Mammary epithelial cell (primary cell): ENCODE measurements at regions of chr20 and their contacts with region 1.

Region 1: GRCh38 chr20:5126512-5127203 is at the start of gene CDS2:
- DNase-seq: peak; percentile 99
- H3K4me3 ChIP-seq: peak within 1 kb of the TSS; percentile 60 to 84 (median 83)
- H3K27ac ChIP-seq: peak within 1 kb of the TSS; percentile 77
- H3K4me1 ChIP-seq: peaks cover 8% of the 10 kb centered on the region
- H3K27me3 ChIP-seq: no peaks in the 10 kb centered on the region
- CTCF ChIP-seq: peak; percentile 3 to 64
- total RNA-seq, gene CDS2: 37.6 to 63.8 TPM

Region 2: DNA sequence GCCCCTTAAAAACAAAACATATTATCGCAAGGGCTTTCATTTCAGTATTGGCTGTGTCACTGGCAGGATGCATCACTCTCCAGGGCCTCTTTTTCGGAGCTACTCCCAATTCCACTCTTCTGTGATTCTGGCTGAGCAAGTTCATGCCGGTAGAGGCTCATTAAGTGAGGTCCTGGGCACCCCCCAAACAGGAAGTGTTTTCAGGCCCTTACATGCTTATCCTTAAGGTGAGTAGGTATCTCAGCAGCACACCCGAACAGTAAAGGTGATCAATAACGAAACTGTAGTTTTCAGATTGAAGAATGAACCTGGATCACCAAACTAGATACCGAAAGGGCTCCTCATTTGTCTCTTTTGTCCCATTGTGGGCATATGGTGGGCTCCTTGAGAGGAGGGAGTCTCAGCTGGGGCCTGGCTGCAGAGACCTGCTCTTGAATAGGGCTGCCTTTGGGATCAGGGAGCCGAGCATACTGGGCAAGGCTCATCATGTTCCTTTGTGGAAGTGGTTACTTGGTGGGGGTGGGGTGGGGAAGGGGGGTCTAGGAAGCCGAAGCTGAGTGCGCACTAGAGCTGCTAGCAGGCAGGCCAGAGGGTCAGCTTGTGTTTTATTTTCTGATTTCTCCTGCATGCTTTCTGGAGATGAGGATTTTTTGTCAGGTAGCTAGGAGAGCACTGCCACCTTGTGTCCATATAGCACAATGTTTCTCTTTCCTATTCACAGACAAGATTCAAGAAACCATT is 65.3 kb after region 1 on chr20:
- CTCF ChIA-PET with region 1: interaction called, 101 read pairs
- dilution Hi-C with region 1: no loop called
- in situ Hi-C with region 1: loop called in 1 of 2 experiments (anchors 5 kb)
- intact Hi-C with region 1: loop called (anchors 1 kb)
- DNase-seq: peak; percentile 63
- H3K4me3 ChIP-seq: no peak overlapping the region
- H3K27ac ChIP-seq: no peak overlapping the region
- H3K4me1 ChIP-seq: peaks cover 4% of the 10 kb centered on the region
- H3K27me3 ChIP-seq: no peaks in the 10 kb centered on the region
- CTCF ChIP-seq: peak; percentile 63 to 70

Region 3: GRCh38 chr20:5205348-5206210 is 78.9 kb after region 1 on chr20:
- CTCF ChIA-PET with region 1: interaction called, 4 read pairs
- dilution Hi-C with region 1: no loop called
- in situ Hi-C with region 1: no loop called
- intact Hi-C with region 1: loop called (anchors 5 kb)
- DNase-seq: peak; percentile 63
- H3K4me3 ChIP-seq: no peak overlapping the region
- H3K27ac ChIP-seq: no peak overlapping the region
- H3K4me1 ChIP-seq: no peaks in the 10 kb centered on the region
- H3K27me3 ChIP-seq: no peaks in the 10 kb centered on the region
- CTCF ChIP-seq: peak; percentile 95 to 96

Region 4: DNA sequence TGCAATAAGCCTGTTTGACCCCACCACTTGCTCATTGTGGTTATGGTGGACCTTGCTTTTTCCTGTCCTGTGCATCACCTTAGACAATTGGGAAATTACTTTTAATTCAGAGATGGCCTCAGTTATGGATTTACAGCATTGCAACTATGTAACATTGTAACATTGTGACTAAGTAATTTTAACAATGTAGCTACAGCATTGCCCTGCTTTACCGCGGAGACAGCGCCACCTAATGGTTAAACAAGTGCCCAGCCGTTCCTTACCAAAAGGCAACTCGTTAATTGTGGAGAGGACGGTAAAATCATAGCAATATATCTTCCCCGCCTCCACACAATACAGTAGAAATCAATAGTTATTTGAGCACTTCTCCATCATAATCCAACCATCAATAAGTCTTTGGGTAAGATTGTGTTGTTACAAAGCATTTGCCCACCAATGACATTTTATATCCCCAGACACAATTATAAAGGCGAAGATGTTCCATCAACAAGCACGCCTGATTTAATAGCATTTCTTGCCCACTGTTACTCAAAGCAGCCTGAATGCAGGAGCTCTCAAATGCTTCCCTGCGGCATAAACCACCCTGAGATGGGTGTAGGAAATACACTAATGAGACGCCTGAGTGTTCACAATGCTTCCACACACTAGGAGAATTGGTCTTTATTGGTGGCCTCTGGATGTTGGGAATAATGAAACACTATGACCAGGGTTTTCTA is 96.4 kb after region 1 on chr20:
- CTCF ChIA-PET with region 1: interaction called, 9 read pairs
- dilution Hi-C with region 1: no loop called
- in situ Hi-C with region 1: no loop called
- intact Hi-C with region 1: loop called (anchors 1 kb)
- DNase-seq: peak; percentile 41
- H3K4me3 ChIP-seq: no peak overlapping the region
- H3K27ac ChIP-seq: no peak overlapping the region
- H3K4me1 ChIP-seq: no peaks in the 10 kb centered on the region
- H3K27me3 ChIP-seq: no peaks in the 10 kb centered on the region
- CTCF ChIP-seq: peak; percentile 89 to 98

Region 5: DNA sequence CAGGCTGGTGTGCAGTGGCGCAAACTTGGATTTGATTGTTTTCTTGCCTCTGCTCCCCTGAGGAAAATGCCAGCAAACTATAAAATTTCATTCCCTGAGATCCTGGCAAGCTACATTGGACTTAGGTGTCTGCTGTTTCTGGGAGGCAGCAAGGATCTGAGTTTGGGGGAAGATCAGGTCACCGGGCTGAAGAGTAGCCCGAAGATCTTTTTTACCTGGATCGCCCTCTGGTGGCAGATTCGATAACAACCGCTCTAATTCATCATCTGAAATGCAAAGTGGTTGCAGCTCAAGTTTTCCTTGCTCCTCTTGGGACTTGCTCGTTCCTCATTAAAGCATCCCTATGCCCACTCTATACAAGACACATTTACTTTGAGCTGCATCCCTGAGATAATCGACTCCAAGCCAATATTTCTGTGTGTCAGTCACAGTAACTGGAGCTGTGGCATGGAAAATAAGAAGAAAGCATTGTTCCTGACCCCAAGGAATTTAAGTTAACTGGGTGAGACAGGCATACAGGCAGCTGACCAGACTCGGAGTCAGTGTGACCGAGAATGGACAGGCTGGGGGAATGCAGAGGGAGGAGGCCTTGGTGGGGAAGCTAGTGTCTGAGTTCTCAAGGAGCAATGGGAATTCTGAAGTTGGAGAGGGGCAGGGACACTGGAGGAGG is 321.9 kb after region 1 on chr20:
- CTCF ChIA-PET with region 1: interaction called, 26 read pairs
- dilution Hi-C with region 1: no loop called
- in situ Hi-C with region 1: no loop called
- intact Hi-C with region 1: loop called (anchors 1 kb)
- DNase-seq: peak; percentile 28
- H3K4me3 ChIP-seq: no peak overlapping the region
- H3K27ac ChIP-seq: no peak overlapping the region
- H3K4me1 ChIP-seq: no peaks in the 10 kb centered on the region
- H3K27me3 ChIP-seq: peaks cover 6% of the 10 kb centered on the region
- CTCF ChIP-seq: peak; percentile 67 to 68

Region 6: DNA sequence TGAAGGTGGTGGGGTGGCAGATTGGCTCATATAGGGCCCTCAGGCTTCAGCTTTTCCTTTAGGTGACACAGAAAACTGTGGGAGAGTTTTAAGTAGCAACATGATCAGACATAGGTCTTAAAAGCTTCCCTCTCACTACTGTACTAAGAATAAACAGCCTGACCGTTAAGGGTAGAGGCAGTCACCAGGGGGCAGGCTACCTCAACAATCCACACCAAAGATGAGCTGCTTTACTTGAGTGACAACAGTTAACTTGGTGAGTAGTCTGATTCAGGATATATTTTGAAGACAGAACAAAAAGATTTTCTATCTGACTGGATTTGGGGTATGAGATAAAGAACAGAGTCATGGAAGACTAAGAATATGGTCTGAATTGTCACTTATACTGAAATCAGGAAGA is 430.5 kb after region 1 on chr20:
- CTCF ChIA-PET with region 1: interaction called, 11 read pairs
- dilution Hi-C with region 1: no loop called
- in situ Hi-C with region 1: no loop called
- intact Hi-C with region 1: no loop called
- DNase-seq: peak; percentile 11
- H3K4me3 ChIP-seq: no peak overlapping the region
- H3K27ac ChIP-seq: no peak overlapping the region
- H3K4me1 ChIP-seq: no peaks in the 10 kb centered on the region
- H3K27me3 ChIP-seq: no peaks in the 10 kb centered on the region
- CTCF ChIP-seq: peak; percentile 57 to 61